Cardiac septum (tissue), 1 donor: ENCODE measurements at regions of chr19 and their contacts with region 1.

Region 1: DNA sequence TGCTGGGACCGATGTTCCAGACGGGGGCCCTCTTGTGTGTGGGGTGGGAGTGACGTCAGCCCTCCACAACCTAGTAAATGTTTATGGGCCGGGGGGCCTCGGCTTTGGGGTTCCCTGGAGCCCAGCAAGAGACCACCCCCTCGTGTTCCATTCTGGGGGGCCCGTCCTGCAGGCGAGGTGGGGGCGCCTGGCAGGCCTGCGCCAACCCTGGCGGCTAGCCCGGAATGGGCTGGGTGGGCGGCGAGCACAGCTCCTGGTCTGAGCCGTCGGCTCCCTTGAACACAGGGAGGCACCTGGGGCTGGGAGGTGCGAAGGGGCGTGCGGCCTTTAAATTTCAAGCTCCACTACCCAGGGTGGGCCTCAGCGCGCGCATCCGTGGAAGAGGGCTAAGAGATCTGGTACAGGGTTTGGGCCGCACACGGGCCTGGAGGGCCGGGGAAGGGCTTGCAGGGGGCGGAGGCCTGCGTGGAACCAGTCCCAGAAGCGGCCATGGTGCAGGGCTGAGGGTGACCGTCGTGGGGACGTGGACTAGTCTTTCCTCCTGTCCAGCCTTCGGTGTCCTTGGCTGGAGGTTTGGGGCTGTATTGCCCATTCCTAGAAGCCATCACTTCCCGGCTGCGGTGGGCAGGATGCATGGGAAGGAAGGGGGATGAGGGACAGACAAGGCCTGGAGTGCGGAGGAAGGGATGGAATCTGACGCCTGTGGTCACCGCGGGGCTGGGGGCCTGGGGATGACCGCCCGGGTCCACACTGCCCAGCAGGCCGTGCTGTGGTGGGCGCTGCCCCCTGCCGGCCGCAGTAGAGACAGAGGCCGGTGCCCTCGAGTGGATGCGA is 11.4 kb downstream of the NDUFA11 start:
- DNase-seq: no peak

Region 2: DNA sequence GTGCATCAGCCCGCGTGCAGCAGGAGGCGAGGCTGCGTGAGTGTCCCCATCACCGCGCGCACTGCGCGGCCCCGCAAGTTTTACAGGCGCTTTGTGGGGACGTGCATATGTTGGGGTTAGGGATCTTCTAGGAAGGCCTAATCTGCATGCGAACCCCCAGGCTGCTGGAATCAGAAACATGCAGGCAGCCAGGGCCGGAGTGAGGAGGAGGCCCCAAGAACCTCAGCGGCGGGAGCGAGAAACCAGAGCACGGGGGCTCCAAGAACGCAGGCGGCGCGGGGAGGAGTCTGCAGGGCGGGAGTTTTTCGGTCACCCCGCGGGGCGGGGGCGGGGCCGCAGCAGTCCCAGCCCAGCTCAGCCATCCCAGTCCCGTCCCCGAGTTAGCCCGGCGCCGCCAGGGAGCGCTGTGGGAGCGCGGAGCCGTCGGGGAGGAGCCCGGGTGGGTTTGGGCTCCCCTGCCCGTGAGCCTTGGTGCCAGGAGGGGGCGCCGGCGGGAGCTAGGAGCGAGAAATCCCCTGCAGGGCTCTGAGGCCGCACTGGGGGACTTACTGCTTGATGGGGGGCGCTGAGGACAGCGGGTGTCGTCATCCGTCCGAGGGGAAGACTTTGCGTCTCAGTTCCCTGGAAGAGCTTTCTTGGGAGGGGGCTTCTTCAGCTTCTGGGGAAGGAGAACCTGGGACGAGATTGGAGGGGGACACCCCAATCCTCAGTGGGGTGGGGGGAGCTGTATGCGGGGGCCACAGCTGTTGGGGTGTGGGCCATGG is 88.2 kb before region 1 on chr19:
- intact Hi-C with region 1: loop called (anchors 1 kb)
- DNase-seq: peak; percentile 93

Region 3: GRCh38 chr19:5913739-5914357 is 21.7 kb after region 1 on chr19 and contains the start of gene CAPS:
- intact Hi-C with region 1: no loop called
- DNase-seq: no peak
- total RNA-seq, gene CAPS: 2.7 TPM

Region 4: GRCh38 chr19:6076675-6077463 is 184.7 kb after region 1 on chr19:
- intact Hi-C with region 1: no loop called
- DNase-seq: no peak